Activated CD4-positive, alpha-beta T cell treated with anti-CD3 and anti-CD28 coated beads, Interleukin-2, amount 10 ng/mL, durations not matched to agents 24 days and 14 days (primary cell): ENCODE measurements at regions of chr11 and their contacts with region 1.

Region 1: DNA sequence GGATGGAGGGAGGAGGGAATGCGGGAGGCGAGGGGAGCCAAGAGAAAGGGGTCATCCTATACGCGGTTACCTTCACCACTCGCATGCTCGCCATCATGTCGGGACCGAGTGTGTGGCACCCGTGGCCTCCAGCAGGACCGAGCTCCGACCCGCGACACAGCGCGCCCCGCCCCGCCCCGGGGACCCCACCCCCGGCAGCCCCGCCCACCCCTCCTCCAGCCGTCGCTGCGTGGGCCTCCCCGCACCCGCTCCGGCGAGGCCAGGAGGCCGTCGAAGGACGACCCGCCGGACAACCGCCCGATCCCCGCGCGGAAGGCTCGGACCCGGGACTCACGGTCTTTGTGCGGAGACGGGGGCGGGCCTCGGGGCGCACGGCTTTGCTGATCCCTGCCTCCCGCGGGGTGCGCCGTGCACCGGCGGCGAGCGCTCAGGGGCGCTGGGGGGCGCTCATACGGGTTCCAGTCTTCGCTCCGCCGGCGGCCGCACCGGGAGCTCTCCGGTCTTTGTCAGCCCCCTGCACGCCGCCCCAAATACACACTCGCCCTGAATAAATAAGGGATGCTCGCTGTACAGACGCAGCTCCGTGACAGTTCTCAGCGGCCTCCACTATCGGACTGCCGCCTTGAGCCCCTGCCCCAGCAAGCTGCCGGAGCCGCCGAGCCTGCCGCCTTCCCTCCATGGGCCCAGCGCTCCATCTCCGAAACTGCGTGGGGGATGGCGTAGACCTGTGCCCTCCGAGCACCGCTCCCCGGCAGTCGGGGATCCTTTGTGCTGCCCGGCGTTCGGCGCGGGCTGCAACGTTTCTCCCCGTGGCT is at the start of gene UBE2L6:
- DNase-seq: peak; percentile 89
- H3K4me3 Mint-ChIP-seq: peak within 1 kb of the TSS; percentile 99
- H3K27ac Mint-ChIP-seq: peak within 1 kb of the TSS; percentile 97
- H3K4me1 Mint-ChIP-seq: peaks cover 40% of the 10 kb centered on the region
- H3K27me3 Mint-ChIP-seq: no peaks in the 10 kb centered on the region
- total RNA-seq, gene UBE2L6: 151 and 157 TPM in 2 replicates

Region 2: DNA sequence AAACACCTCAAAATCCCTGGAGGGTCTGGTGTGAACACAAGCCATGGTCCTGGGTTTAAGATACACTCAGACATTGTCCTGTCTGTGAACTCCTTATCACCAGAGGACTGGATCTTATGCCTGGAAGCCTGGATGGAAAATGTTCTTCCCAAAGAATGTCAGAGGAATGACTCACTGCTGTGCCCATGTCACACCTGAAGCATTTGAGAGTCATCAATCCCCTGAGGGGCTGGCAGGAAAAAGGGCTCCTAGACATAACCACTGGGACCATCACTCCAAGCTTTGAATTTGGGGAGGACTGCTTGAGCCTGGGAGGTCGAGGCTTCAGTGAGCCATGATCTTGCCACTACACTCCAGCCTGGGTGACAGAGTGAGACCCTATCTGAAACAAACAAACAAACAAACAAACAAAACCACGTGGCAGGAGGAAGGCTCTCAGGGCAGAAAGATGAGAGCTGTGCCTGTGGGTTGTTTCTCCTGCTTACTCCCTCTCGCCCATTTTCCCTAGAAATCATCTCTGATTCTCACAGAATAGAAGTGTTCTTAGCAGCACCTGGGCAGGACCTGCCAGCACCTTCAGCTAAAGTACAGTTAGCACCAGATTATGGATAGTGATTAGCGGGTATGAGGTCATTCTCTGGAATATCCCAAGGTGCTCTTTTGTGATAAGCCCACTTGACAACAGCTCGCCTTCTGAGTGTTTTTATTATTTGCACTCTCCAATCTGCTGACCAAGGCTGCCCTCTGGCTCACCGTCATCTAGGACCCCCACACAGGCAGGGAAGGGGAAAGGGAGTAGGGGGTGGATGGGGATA is 165.3 kb before region 1 on chr11:
- intact Hi-C with region 1: no loop called
- DNase-seq: no peak
- H3K4me3 Mint-ChIP-seq: no peak overlapping the region
- H3K27ac Mint-ChIP-seq: peak overlapping the region; percentile 1
- H3K4me1 Mint-ChIP-seq: peaks cover 27% of the 10 kb centered on the region
- H3K27me3 Mint-ChIP-seq: no peaks in the 10 kb centered on the region

Region 3: GRCh38 chr11:57426929-57427726 is 140.6 kb before region 1 on chr11 and contains the start of gene SLC43A3:
- intact Hi-C with region 1: loop called (anchors 1 kb)
- DNase-seq: peak; percentile 91
- H3K4me3 Mint-ChIP-seq: peak within 1 kb of the TSS; percentile 96
- H3K27ac Mint-ChIP-seq: peak within 1 kb of the TSS; percentile 95
- H3K4me1 Mint-ChIP-seq: peaks cover 43% of the 10 kb centered on the region
- H3K27me3 Mint-ChIP-seq: peaks cover 9% of the 10 kb centered on the region
- total RNA-seq, gene SLC43A3: 255 and 261 TPM in 2 replicates

Region 4: GRCh38 chr11:57546869-57547475 is 20.8 kb before region 1 on chr11:
- intact Hi-C with region 1: no loop called
- DNase-seq: no peak
- H3K4me3 Mint-ChIP-seq: no peak overlapping the region
- H3K27ac Mint-ChIP-seq: peak overlapping the region; percentile 72
- H3K4me1 Mint-ChIP-seq: no peaks in the 10 kb centered on the region
- H3K27me3 Mint-ChIP-seq: no peaks in the 10 kb centered on the region

Region 5: DNA sequence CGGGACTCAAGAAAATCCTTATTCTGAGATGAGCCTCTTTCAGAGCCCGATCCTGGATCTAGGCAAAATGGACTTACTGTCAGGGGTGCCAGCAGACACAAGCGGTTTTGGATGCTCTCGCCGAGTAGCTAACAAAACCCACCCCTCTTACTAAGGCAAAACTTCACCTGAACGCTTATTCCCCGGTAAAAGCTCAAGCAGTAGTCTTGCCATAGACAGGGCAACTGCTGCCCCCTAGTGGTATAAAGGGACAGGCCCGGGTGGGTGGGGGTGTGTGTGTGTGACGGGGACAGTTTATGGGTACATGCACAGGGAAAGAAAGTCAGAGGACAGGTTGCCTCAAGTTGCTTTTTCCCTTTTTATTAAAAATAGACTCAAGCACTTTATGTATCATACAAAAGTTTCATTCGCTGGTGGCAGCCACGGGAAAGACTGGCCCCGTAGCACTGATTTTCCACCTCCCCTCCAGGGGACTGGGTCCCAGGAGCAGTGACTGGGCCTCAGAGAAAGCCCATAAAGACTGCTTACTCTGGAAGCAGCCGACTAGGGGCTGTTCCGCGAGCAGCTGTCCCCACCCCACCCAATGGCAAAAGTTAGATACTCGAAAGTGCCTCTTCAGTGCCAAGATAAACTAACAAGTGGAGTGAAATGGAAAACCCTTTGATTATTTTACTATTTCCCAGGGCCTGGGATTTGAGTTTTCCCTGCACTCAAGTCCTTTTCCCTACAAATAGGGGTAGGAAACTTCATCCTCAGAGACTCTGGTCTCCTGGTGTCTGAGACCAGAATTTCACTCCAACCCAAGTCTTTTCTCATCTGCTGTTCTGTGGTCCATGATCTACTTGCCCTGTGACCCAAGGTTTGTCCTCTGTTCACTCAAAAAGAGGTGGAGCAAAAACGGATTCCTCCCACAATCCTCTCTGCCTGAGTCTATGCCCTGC is 77.3 kb after region 1 on chr11:
- intact Hi-C with region 1: loop called (anchors 1 kb)
- DNase-seq: peak; percentile 96
- H3K4me3 Mint-ChIP-seq: no peak overlapping the region
- H3K27ac Mint-ChIP-seq: no peak overlapping the region
- H3K4me1 Mint-ChIP-seq: peaks cover 48% of the 10 kb centered on the region
- H3K27me3 Mint-ChIP-seq: peaks cover 40% of the 10 kb centered on the region

Region 6: GRCh38 chr11:57667736-57668435 is 100.2 kb after region 1 on chr11 and contains the start of gene ZDHHC5:
- intact Hi-C with region 1: loop called (anchors 1 kb)
- DNase-seq: peak; percentile 100
- H3K4me3 Mint-ChIP-seq: peak within 1 kb of the TSS; percentile 86
- H3K27ac Mint-ChIP-seq: peak within 1 kb of the TSS; percentile 97
- H3K4me1 Mint-ChIP-seq: peaks cover 35% of the 10 kb centered on the region
- H3K27me3 Mint-ChIP-seq: no peaks in the 10 kb centered on the region
- total RNA-seq, gene ZDHHC5: 78.4 and 80.9 TPM in 2 replicates

Region 7: GRCh38 chr11:57741132-57742086 is 173.7 kb after region 1 on chr11 and contains the start of gene SELENOH:
- intact Hi-C with region 1: loop called (anchors 1 kb)
- DNase-seq: peak; percentile 98
- H3K4me3 Mint-ChIP-seq: peak within 1 kb of the TSS; percentile 93
- H3K27ac Mint-ChIP-seq: peak within 1 kb of the TSS; percentile 96
- H3K4me1 Mint-ChIP-seq: peaks cover 30% of the 10 kb centered on the region
- H3K27me3 Mint-ChIP-seq: no peaks in the 10 kb centered on the region
- total RNA-seq, gene SELENOH: 211 and 216 TPM in 2 replicates

Region 8: GRCh38 chr11:57800444-57801182 is 232.9 kb after region 1 on chr11:
- intact Hi-C with region 1: loop called (anchors 1 kb)
- DNase-seq: peak; percentile 80
- H3K4me3 Mint-ChIP-seq: peak overlapping the region; percentile 32
- H3K27ac Mint-ChIP-seq: peak overlapping the region; percentile 23
- H3K4me1 Mint-ChIP-seq: peaks cover 28% of the 10 kb centered on the region
- H3K27me3 Mint-ChIP-seq: no peaks in the 10 kb centered on the region

Region 9: DNA sequence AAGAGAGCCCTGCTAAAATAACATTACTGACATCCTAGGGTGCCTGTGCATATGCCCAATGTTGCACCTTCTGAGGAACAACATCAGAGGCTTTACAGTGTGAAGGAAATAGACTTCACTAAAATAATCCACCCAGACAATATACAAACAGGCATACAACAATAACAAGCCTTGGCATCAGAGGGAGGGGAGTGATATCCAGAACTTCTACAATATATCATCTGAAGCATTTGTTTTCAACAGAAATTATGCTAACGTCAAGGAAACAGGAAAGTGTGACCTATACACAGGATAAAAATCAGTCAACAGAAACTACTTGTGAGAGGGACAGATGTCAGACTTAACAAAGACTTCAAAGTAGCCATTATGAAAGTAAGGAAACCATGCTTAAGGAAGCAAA is 275.2 kb after region 1 on chr11:
- intact Hi-C with region 1: no loop called
- DNase-seq: no peak
- H3K4me3 Mint-ChIP-seq: no peak overlapping the region
- H3K27ac Mint-ChIP-seq: no peak overlapping the region
- H3K4me1 Mint-ChIP-seq: no peaks in the 10 kb centered on the region
- H3K27me3 Mint-ChIP-seq: no peaks in the 10 kb centered on the region

Region 10: DNA sequence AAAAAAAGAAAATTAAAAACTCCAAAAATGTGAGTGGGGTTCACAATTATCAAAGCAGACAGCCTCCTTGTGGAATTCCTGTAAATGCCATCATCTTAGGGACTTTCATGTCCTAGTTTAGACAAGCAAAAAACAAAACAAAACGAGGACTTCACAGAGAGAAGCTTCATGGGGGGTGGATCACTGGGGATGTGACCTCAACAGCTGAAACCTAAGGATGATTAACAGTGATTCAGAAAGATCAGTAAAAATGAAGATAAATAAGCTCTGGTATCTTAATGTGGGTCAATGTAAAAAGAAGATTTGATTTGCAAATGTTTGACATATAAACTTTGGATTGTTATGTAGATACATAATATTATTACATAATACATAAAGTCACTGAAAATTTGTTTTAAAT is 708.4 kb after region 1 on chr11:
- intact Hi-C with region 1: no loop called
- DNase-seq: no peak
- H3K4me3 Mint-ChIP-seq: no peak overlapping the region
- H3K27ac Mint-ChIP-seq: no peak overlapping the region
- H3K4me1 Mint-ChIP-seq: no peaks in the 10 kb centered on the region
- H3K27me3 Mint-ChIP-seq: no peaks in the 10 kb centered on the region

Region 11: DNA sequence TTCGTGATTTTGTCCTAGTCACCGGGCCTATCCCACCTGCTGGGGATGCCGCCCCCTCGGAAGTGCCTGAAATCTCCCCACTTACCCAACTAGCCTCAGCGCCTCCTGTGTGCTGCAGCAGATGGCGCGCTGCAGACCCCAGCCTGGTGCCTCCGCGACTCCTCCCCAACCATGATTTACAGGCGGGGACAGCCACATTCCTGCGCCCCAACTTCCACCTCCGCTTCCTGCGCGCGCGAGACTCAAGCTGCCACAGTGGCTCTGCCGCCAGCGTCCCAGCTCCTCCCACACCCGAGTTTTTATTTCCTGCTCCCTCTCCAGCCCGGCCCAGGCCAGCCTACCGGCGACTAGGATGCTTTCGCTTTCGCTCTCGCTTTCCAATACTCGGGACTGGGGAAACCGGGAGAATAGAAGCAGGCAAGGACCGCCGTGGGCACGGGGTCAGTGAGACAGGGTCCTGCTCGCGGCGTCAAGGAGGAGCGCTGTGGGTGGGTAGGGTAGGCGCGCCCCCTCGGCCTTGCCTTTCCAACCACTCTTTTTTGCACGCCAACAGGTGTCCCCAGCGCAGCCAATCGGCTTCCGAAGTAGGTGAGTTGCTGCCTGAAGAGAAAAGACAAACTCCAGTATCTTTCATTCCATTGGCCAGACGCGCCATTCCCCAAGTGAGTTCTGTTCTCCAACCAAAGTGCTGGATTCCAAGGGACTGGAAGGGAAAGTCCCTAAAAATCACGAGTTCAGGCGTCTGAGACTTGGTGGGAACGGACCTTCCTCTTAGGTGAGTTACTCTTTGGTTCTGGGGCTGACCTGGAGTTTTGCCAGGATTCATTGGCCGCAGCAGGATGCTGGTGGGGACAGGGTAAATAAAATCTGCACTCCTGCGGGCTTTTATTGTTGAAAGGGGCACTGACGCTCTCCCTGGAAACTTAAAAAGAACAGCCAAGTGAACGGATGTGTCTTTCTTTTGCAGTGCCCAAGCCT is 1575.1 kb after region 1 on chr11 and contains the start of gene FAM111A:
- intact Hi-C with region 1: loop called (anchors 10 kb)
- DNase-seq: peak; percentile 97
- H3K4me3 Mint-ChIP-seq: peak within 1 kb of the TSS; percentile 91
- H3K27ac Mint-ChIP-seq: peak within 1 kb of the TSS; percentile 96
- H3K4me1 Mint-ChIP-seq: peaks cover 59% of the 10 kb centered on the region
- H3K27me3 Mint-ChIP-seq: no peaks in the 10 kb centered on the region
- total RNA-seq, gene FAM111A: 62.2 and 71.2 TPM in 2 replicates